HepG2 (cell line): ENCODE measurements at regions of chr12 and their contacts with region 1.

Region 1: GRCh38 chr12:96375841-96376604 is 24.2 kb downstream of the CDK17 start:
- DNase-seq: no peak
- ATAC-seq: no peak
- H3K4me3 ChIP-seq: no peak overlapping the region
- H3K27ac ChIP-seq: no peak overlapping the region
- H3K4me1 ChIP-seq: 0 out of 2 replicates have a peak, but pooled peaks cover 6% of the 10 kb centered on the region
- H3K27me3 ChIP-seq: no peaks in the 10 kb centered on the region
- CTCF ChIP-seq: no peak
- EP300 ChIP-seq: no peak
- POLR2A ChIP-seq: no peak
- RAD21 ChIP-seq: no peak

Region 2: DNA sequence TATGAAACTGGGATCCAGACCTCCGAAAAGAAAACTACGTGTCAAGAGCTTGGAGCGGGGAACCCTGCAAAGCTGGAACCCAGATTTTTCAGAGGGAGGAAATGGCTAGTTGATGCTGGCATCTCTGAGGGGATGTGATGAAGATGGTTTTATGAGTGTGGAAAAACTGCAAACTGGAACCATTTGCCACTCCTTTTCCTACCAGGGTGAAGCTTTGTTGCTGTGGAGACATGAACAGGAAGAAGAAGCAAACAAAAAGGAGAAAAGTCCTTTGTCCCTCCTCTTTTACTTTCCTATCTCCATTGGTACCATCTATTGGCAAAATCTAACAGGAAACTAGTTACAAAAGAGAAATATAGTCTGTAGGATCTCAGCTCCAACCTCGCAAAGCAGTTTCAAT is 14.9 kb before region 1 on chr12:
- CTCF ChIA-PET with region 1: no interaction called
- POLR2A ChIA-PET with region 1: no interaction called
- in situ Hi-C with region 1: no loop called
- intact Hi-C with region 1: loop called (anchors 2 kb)
- DNase-seq: no peak
- ATAC-seq: no peak
- H3K4me3 ChIP-seq: no peak overlapping the region
- H3K27ac ChIP-seq: no peak overlapping the region
- H3K4me1 ChIP-seq: peaks cover 56% of the 10 kb centered on the region
- H3K27me3 ChIP-seq: no peaks in the 10 kb centered on the region
- CTCF ChIP-seq: no peak
- EP300 ChIP-seq: no peak
- POLR2A ChIP-seq: no peak
- RAD21 ChIP-seq: no peak